H1 (cell line): ENCODE measurements at regions of chr5 and their contacts with region 1.

Region 1: DNA sequence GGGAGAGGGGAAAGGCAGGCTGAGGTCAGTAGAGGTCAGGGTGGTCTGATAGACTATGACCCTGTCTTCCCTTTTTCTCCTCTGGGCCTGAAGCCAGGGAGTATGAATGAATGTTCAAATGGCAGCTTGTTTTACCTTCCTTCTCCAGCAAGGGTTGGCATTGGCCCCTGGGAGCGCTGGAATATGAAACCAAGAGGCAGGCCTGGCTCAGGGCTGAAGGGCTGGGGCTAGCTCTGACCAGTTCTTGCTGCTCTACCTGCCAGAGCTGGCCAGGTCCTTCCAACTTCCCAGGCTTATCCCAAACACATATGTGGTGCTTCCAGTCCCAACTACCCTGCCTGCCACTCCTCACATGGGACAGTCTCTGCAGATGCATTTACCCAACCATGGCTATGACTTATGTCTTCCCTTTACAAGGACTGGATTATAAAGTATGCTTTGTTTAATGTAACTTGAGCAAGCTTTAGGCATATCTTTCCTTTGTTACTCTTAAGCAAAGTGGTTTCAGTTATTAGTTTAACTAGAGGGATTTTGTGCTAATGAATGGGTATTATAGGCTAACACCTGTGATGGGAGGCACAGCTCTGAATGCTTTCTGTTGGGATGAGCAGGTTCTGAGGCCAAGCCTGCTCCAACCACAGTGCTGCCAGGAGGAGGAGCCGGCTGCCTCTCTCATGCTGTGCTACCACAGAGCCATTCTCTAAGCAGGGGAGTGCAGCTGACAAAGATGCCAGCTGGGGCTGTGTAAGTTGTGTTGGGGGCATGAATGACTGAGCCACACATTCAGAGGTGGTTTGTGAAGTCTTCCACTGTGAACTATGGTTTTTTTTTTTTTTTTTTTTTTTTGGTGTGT is 6.1 kb downstream of the CCNI2 start:
- DNase-seq: peak in 1 of 2 experiments; percentile 47
- H3K4me3 ChIP-seq: no peak overlapping the region
- H3K27ac ChIP-seq: no peak overlapping the region
- H3K4me1 ChIP-seq: peaks cover 0 to 6% (median 3%) of the 10 kb centered on the region in 4 experiments; a peak in 3 of 7 replicates
- H3K27me3 ChIP-seq: peaks cover 7 to 20% (median 15%) of the 10 kb centered on the region in 4 experiments
- CTCF ChIP-seq: peak; percentile 33 to 45 (median 39)
- EP300 ChIP-seq: no peak
- POLR2A ChIP-seq: no peak
- RAD21 ChIP-seq: peak; percentile 51 to 61

Region 2: DNA sequence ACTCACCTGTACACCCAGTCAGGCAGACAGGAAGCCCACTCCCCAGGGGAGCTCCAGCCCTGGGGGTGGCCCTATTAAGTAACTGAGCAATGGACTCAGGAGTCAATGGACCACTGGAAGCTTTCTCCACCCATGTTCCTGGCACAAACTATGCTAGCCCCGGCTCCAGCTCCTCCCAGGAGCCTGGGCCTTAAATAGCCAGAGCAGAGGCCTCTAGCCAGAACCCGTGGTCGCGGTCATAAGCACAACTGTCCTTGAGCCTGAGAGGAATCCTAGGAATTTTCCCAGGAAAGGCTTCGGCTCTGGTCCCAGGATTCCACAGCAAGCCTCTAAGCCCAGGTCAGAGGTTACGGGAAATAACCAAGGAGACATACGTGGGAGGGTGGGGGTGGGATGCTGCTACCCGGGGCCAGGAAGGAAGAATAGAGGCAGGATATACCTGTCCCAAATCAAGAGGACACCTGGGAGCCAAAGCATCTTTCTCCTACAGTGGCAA is 18.2 kb after region 1 on chr5:
- CTCF ChIA-PET with region 1: interaction called, 60 read pairs
- POLR2A ChIA-PET with region 1: interaction called, 5 read pairs
- DNase-seq: no peak
- H3K4me3 ChIP-seq: no peak overlapping the region
- H3K27ac ChIP-seq: no peak overlapping the region
- H3K4me1 ChIP-seq: peaks cover 0 to 22% (median 5%) of the 10 kb centered on the region in 4 experiments; a peak in 5 of 7 replicates
- H3K27me3 ChIP-seq: peaks cover 0 to 22% (median 16%) of the 10 kb centered on the region in 4 experiments; a peak in 5 of 7 replicates
- CTCF ChIP-seq: no peak
- EP300 ChIP-seq: no peak
- POLR2A ChIP-seq: no peak
- RAD21 ChIP-seq: no peak

Region 3: DNA sequence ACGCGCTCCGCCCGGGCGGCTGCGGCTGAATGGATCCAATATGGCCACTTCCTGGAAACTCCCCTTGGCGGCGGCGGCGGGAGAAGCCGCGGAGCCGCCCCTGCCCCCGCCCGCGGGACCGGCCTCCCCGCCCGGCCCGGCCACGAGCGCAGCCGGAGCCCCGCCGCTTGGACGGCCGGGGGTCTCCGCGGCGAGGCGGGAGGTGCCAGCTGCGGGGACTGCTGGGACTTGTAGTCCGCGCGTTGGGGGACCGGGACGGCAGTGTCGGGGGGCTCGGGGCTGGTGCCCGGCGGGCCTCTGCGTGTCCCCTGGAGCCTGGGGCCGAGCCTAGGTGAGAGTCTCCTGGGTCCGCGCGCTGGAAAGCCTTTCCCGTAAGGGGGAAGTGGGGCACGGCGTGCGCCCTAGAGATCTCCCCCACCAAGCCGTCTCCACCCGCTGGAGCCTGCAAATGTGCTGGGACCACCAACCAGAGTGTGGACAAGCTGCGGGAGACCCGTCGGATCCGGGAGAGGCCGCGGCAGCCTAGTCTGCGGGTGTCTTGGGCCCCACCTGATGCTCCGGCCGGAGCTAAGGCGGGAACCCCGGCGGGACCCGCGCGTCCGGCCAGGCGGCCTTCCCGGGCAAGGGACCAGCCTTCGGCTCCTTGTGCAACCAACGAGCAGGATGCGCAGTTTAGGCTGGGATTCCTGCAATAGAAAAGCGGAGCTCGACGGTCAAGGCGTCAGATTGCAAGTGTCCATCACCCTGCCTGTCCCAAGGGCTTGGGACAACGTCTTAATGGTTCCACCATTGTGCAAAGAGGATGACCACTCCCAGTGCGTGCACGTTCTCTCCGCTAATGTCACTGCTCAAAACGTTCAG is 24.1 kb after region 1 on chr5 and contains the start of gene SEPTIN8:
- CTCF ChIA-PET with region 1: interaction called, 58 read pairs
- POLR2A ChIA-PET with region 1: interaction called, 3 read pairs
- DNase-seq: peak in 1 of 2 experiments; percentile 73
- H3K4me3 ChIP-seq: peak within 1 kb of the TSS; percentile 68 to 75 (median 73)
- H3K27ac ChIP-seq: no peak within 1 kb of the TSS
- H3K4me1 ChIP-seq: peaks cover 0 to 9% (median 2%) of the 10 kb centered on the region in 4 experiments; a peak in 5 of 7 replicates
- H3K27me3 ChIP-seq: peaks cover 2 to 51% (median 34%) of the 10 kb centered on the region in 4 experiments
- CTCF ChIP-seq: no peak
- EP300 ChIP-seq: no peak
- POLR2A ChIP-seq: no peak
- RAD21 ChIP-seq: no peak
- total RNA-seq, gene SEPTIN8: 33.0 and 33.8 TPM in 2 replicates

Region 4: DNA sequence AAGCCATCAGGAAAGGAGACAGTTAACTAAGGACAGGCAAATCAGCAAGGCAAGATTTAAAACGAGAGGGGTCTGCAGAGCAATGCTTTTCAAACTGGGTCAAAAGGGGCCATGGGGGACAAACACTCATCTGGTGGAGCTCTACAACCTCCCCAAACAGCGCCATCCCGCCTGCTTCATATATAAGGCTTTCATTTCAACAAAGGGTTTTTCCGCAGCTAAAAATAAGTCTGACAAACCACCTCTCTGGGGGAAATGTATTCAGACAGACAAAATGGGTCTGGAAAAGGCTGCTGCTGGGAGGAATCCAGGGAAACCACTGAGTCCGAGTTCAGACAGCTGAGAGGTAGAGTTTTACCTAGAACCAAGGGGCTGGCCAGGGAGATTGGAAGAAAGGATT is 32.0 kb after region 1 on chr5:
- CTCF ChIA-PET with region 1: interaction called, 11 read pairs
- POLR2A ChIA-PET with region 1: no interaction called
- DNase-seq: no peak
- H3K4me3 ChIP-seq: no peak overlapping the region
- H3K27ac ChIP-seq: no peak overlapping the region
- H3K4me1 ChIP-seq: no peaks in the 10 kb centered on the region; a peak in 1 of 7 replicates
- H3K27me3 ChIP-seq: no peaks in the 10 kb centered on the region
- CTCF ChIP-seq: no peak
- EP300 ChIP-seq: no peak
- POLR2A ChIP-seq: no peak
- RAD21 ChIP-seq: no peak

Region 5: DNA sequence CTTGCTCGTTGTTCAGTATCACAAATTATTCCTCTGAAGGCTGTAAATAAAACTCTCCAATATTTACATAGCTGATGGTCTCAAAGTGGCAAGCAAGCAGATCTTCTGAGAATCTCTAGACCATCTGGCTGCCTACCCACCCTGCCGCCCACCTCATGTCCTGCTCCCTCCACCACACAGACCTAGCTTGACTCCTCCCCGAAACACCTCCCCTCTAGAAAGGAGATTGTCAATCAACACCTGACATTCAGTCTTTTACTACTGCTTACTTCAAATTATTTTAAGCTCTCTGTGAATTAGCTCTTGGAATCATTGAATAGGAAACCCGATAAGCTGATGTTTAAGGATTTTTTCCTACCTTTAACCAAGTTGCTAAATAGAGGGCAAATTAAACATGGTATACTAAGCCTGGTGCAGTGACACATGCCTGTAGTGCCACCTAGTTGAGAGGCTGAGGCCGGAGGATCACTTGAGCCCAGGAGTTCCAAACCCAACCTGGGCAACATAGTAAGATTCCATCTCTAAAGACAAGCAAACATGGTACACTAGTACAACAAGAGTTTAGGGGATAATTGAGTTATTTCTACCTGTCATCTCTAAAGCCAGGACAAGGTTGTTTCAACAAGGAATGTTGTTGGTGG is 48.8 kb after region 1 on chr5:
- CTCF ChIA-PET with region 1: interaction called, 19 read pairs
- POLR2A ChIA-PET with region 1: no interaction called
- DNase-seq: no peak
- H3K4me3 ChIP-seq: no peak overlapping the region
- H3K27ac ChIP-seq: no peak overlapping the region
- H3K4me1 ChIP-seq: peaks cover 0 to 3% (median 1%) of the 10 kb centered on the region in 4 experiments; a peak in 5 of 7 replicates
- H3K27me3 ChIP-seq: peaks cover 0 to 1% (median 0%) of the 10 kb centered on the region in 4 experiments; a peak in 1 of 7 replicates
- CTCF ChIP-seq: peak in 2 of 3 experiments; percentile 9 to 13; a peak in 2 of 4 replicates
- EP300 ChIP-seq: no peak
- POLR2A ChIP-seq: no peak
- RAD21 ChIP-seq: peak; percentile 22 to 41; a peak in 2 of 4 replicates

Region 6: GRCh38 chr5:132807163-132807838 is 53.9 kb after region 1 on chr5:
- CTCF ChIA-PET with region 1: interaction called, 19 read pairs
- POLR2A ChIA-PET with region 1: no interaction called
- DNase-seq: no peak
- H3K4me3 ChIP-seq: no peak overlapping the region
- H3K27ac ChIP-seq: no peak overlapping the region
- H3K4me1 ChIP-seq: peaks cover 0 to 5% (median 2%) of the 10 kb centered on the region in 4 experiments; a peak in 5 of 7 replicates
- H3K27me3 ChIP-seq: peaks cover 7 to 14% (median 11%) of the 10 kb centered on the region in 4 experiments
- CTCF ChIP-seq: peak; percentile 48 to 70 (median 61)
- EP300 ChIP-seq: no peak
- POLR2A ChIP-seq: no peak
- RAD21 ChIP-seq: peak; percentile 40 to 52